ENCODE measurements at regions of chr10 and their contacts with region 1.

Region 1: GRCh38 chr10:24724381-24725228 is 918 bp upstream of the ARHGAP21 start:
- DNase-seq: peak; percentile 98
- H3K4me3 ChIP-seq: peak overlapping the region; percentile 79
- H3K27ac ChIP-seq: peak overlapping the region; percentile 79
- H3K4me1 ChIP-seq: peaks cover 6% of the 10 kb centered on the region
- H3K27me3 ChIP-seq: no peaks in the 10 kb centered on the region
- CTCF ChIP-seq: no peak

Region 2: GRCh38 chr10:24642622-24643417 is 81.8 kb before region 1 on chr10:
- CTCF ChIA-PET with region 1: no interaction called
- POLR2A ChIA-PET with region 1: no interaction called
- intact Hi-C with region 1: loop called (anchors 5 kb)
- DNase-seq: peak; percentile 80
- H3K4me3 ChIP-seq: no peak overlapping the region
- H3K27ac ChIP-seq: no peak overlapping the region
- H3K4me1 ChIP-seq: no peaks in the 10 kb centered on the region
- H3K27me3 ChIP-seq: no peaks in the 10 kb centered on the region
- CTCF ChIP-seq: peak; percentile 87

Region 3: GRCh38 chr10:24790599-24790998 is 66.0 kb after region 1 on chr10:
- CTCF ChIA-PET with region 1: no interaction called
- POLR2A ChIA-PET with region 1: no interaction called
- intact Hi-C with region 1: no loop called
- DNase-seq: no peak
- H3K4me3 ChIP-seq: no peak overlapping the region
- H3K27ac ChIP-seq: no peak overlapping the region
- H3K4me1 ChIP-seq: no peaks in the 10 kb centered on the region
- H3K27me3 ChIP-seq: no peaks in the 10 kb centered on the region
- CTCF ChIP-seq: no peak

Region 4: GRCh38 chr10:24851629-24852028 is 127.0 kb after region 1 on chr10:
- CTCF ChIA-PET with region 1: no interaction called
- POLR2A ChIA-PET with region 1: no interaction called
- intact Hi-C with region 1: loop called (anchors 5 kb)
- DNase-seq: peak; percentile 74
- H3K4me3 ChIP-seq: no peak overlapping the region
- H3K27ac ChIP-seq: peak overlapping the region; percentile 43
- H3K4me1 ChIP-seq: peaks cover 51% of the 10 kb centered on the region
- H3K27me3 ChIP-seq: no peaks in the 10 kb centered on the region
- CTCF ChIP-seq: no peak

Region 5: GRCh38 chr10:24952707-24953645 is 228.4 kb after region 1 on chr10:
- CTCF ChIA-PET with region 1: no interaction called
- POLR2A ChIA-PET with region 1: interaction called, 3 read pairs
- intact Hi-C with region 1: loop called (anchors 5 kb)
- DNase-seq: peak; percentile 78
- H3K4me3 ChIP-seq: peak overlapping the region; percentile 57
- H3K27ac ChIP-seq: peak overlapping the region; percentile 91
- H3K4me1 ChIP-seq: peaks cover 23% of the 10 kb centered on the region
- H3K27me3 ChIP-seq: no peaks in the 10 kb centered on the region
- CTCF ChIP-seq: peak; percentile 39

Region 6: DNA sequence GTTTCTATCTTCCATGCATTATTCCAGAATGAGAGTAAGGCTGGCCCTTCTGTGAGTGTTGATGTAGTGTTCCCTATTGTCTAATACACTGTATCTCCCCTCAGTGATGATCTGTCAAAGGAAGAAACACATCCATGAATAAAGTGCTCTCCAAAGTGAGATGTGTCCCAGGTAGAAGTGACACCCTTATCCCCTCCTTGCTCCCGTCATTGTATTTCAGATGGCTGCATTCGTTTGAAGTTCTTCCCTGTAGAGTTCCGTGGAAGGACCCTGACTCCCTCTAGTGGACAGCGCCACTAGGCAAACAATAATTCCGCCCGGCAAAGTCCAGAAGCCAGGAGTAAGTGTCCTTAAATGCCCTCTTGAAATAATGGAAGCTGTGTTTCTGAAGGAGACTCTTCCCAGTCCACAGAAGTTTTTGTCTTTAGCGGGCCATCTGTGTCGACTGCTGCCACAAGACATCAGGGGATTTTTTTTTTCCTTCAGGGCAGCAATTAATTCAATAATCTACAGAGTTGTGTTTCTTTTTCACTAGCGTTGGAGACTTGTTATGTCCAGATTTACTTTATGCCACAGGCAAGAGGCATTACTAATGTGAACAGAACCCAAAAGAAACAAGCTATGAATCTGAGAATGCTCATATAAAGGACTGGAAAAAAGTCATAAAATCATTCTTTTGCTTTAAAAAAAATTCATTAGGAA is 356.4 kb after region 1 on chr10:
- CTCF ChIA-PET with region 1: no interaction called
- POLR2A ChIA-PET with region 1: no interaction called
- intact Hi-C with region 1: loop called (anchors 10 kb)
- DNase-seq: peak; percentile 86
- H3K4me3 ChIP-seq: no peak overlapping the region
- H3K27ac ChIP-seq: no peak overlapping the region
- H3K4me1 ChIP-seq: no peaks in the 10 kb centered on the region
- H3K27me3 ChIP-seq: no peaks in the 10 kb centered on the region
- CTCF ChIP-seq: peak; percentile 95

Measured in A673 (cell line).